ENCODE measurements at regions of chr10 and their contacts with region 1.

Region 1: DNA sequence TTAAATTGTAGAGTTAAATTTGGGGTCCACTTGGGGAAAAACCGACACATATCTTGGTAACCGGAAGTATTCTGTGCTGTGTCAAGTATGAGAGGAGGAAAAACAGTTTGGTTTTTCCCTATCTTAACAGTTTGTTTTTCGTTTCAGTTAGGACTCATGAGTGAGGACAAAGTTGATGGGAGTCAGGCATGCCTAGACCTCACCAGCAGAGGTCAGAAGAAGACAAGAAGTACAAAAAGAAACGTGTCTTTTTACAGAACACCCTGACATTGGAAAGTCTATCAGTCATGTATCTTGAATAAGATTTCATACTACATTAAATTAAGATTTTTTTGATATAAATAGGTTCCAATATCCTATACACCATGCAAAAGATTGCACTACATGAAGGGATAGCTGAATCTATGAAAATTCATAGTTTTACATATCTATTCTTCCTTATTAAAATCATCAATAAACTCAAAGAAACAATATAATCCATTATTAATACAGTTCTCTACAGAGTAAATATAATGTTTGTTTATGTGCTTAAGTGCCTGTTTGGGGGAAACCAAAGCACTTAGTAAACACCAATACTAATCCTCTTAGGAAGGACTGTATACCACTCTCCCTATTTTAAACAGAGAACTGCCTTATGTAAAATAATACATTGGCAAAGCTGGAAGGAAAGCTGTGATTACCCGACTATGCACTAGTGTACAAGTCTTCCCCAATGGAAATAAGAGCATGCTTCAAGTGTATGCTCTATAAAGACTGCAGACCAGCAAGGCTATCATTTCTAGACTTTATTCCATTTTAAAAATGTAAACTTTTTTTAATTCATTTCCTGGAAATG is 95.6 kb downstream of the USP6NL start:
- DNase-seq: no peak
- ATAC-seq: peak; percentile 72
- H3K4me3 Mint-ChIP-seq: peak overlapping the region; percentile 46
- H3K27ac Mint-ChIP-seq: peak overlapping the region; percentile 82
- H3K4me1 Mint-ChIP-seq: peaks cover 53% of the 10 kb centered on the region
- H3K27me3 Mint-ChIP-seq: no peaks in the 10 kb centered on the region
- CTCF ChIP-seq: peak; percentile 86

Region 2: GRCh38 chr10:11270135-11270857 is 245.5 kb before region 1 on chr10:
- CTCF ChIA-PET with region 1: no interaction called
- POLR2A ChIA-PET with region 1: no interaction called
- intact Hi-C with region 1: no loop called
- DNase-seq: peak; percentile 57
- ATAC-seq: peak; percentile 89
- H3K4me3 Mint-ChIP-seq: peak overlapping the region; percentile 28
- H3K27ac Mint-ChIP-seq: peak overlapping the region; percentile 77
- H3K4me1 Mint-ChIP-seq: peaks cover 64% of the 10 kb centered on the region
- H3K27me3 Mint-ChIP-seq: no peaks in the 10 kb centered on the region
- CTCF ChIP-seq: no peak

Region 3: DNA sequence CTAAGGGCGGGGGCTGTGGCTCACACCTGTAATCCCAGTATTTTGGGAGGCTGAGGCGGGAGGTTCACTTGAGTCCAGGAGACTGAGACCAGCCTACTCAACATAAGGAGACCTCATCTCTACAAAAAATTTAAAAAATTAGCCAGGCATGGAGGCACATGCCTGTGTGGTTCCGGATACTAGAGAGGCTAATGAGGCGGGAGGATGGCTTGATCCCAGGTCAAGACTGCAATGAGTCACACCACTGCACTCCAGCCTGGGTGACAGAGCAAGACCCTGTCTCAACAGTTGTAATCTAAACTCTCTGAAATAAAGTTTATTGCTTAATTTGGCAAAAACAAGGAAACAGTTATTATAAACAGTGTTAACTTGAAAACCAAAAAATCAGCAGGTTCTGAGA is 27.7 kb before region 1 on chr10:
- CTCF ChIA-PET with region 1: no interaction called
- POLR2A ChIA-PET with region 1: no interaction called
- intact Hi-C with region 1: no loop called
- DNase-seq: no peak
- ATAC-seq: no peak
- H3K4me3 Mint-ChIP-seq: no peak overlapping the region
- H3K27ac Mint-ChIP-seq: no peak overlapping the region
- H3K4me1 Mint-ChIP-seq: peaks cover 16% of the 10 kb centered on the region
- H3K27me3 Mint-ChIP-seq: no peaks in the 10 kb centered on the region
- CTCF ChIP-seq: no peak

Region 4: DNA sequence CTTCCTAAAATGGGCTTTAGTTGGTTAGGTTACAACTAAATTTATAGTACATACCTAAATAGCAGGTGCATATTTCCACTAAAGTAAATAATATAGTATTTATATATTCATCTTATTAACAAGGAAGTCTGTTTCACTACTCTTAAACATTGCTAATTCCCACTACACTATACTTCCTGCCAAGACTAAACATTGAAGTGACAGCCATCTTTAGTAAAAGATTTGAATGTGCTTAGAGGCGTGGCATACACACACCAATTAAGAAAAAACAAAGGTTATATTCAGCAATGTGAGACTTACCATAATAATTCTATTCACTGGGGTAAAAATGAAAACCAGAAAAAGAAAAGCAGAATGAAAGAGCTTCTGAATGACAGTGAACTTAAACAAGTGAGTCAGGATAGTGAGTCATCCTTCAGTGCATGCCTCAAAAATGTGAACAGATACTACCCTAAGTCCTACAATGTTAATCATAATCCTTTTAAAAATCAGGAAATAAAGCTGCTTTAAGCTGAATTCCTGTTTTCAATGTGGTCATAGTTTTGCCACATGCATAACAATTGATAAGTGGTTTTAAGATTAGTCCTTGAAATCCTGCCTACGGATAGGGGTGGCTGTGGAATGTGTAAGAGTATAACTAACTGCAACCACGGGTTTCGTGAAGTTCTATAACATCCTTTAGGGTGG is 36.2 kb after region 1 on chr10:
- CTCF ChIA-PET with region 1: no interaction called
- POLR2A ChIA-PET with region 1: no interaction called
- intact Hi-C with region 1: loop called (anchors 2 kb)
- DNase-seq: no peak
- ATAC-seq: peak; percentile 55
- H3K4me3 Mint-ChIP-seq: peak overlapping the region; percentile 66
- H3K27ac Mint-ChIP-seq: peak overlapping the region; percentile 87
- H3K4me1 Mint-ChIP-seq: peaks cover 83% of the 10 kb centered on the region
- H3K27me3 Mint-ChIP-seq: no peaks in the 10 kb centered on the region
- CTCF ChIP-seq: no peak

Region 5: GRCh38 chr10:11578802-11579255 is 63.0 kb after region 1 on chr10:
- CTCF ChIA-PET with region 1: interaction called, 3 read pairs
- POLR2A ChIA-PET with region 1: no interaction called
- intact Hi-C with region 1: loop called (anchors 2 kb)
- DNase-seq: no peak
- ATAC-seq: peak; percentile 72
- H3K4me3 Mint-ChIP-seq: peak overlapping the region; percentile 46
- H3K27ac Mint-ChIP-seq: peak overlapping the region; percentile 67
- H3K4me1 Mint-ChIP-seq: peaks cover 75% of the 10 kb centered on the region
- H3K27me3 Mint-ChIP-seq: no peaks in the 10 kb centered on the region
- CTCF ChIP-seq: no peak

Region 6: GRCh38 chr10:11684717-11685645 is 169.2 kb after region 1 on chr10:
- CTCF ChIA-PET with region 1: interaction called, 4 read pairs
- POLR2A ChIA-PET with region 1: interaction called, 3 read pairs
- intact Hi-C with region 1: loop called (anchors 1 kb)
- DNase-seq: peak; percentile 69
- ATAC-seq: peak; percentile 76
- H3K4me3 Mint-ChIP-seq: peak overlapping the region; percentile 90
- H3K27ac Mint-ChIP-seq: peak overlapping the region; percentile 100
- H3K4me1 Mint-ChIP-seq: peaks cover 91% of the 10 kb centered on the region
- H3K27me3 Mint-ChIP-seq: no peaks in the 10 kb centered on the region
- CTCF ChIP-seq: no peak

Region 7: DNA sequence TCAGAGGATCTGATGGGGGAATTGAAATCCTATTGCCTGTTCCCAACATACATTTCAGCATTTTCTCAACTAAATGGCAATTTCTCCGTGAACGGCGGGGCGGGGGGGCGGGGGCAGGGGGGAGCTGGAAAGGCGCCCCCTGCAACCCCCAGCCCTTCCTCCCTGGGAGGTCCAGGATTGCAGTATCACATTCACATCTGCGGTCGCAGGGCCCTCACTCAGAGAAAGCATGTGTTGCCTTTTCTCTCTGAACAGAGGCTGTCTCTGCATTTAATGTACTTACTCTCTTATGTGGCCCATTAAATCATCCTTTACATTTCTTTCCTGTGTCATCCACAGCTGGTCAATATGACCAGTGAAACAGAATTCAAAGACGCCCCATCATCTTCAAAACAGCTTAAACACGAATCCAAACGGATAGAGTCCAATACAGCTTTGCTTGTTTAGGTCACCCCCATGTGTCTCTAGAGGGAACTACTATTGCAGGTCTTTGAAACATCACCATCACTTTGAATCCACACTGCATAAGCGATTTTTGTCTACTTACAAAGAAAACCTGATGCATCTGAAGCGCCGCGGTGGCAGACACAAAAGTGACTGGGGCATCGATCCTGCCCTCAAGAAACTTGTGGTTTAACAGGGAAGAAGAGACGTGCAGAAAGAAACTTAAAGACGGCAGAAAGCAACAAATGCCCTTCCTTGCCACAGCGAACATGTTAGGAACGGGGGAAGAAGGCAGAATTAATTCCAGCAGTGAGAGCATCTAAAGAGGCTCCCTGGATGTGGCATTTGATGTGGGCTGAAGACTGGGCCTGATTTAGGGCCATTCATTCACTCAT is 209.3 kb after region 1 on chr10:
- CTCF ChIA-PET with region 1: interaction called, 92 read pairs
- POLR2A ChIA-PET with region 1: interaction called, 6 read pairs
- intact Hi-C with region 1: loop called (anchors 1 kb)
- DNase-seq: no peak
- ATAC-seq: peak; percentile 95
- H3K4me3 Mint-ChIP-seq: no peak overlapping the region
- H3K27ac Mint-ChIP-seq: peak overlapping the region; percentile 79
- H3K4me1 Mint-ChIP-seq: peaks cover 29% of the 10 kb centered on the region
- H3K27me3 Mint-ChIP-seq: no peaks in the 10 kb centered on the region
- CTCF ChIP-seq: peak; percentile 45

Region 8: GRCh38 chr10:11757821-11758463 is 242.1 kb after region 1 on chr10:
- CTCF ChIA-PET with region 1: interaction called, 76 read pairs
- POLR2A ChIA-PET with region 1: interaction called, 3 read pairs
- intact Hi-C with region 1: loop called (anchors 1 kb)
- DNase-seq: peak; percentile 72
- ATAC-seq: peak; percentile 100
- H3K4me3 Mint-ChIP-seq: no peak overlapping the region
- H3K27ac Mint-ChIP-seq: no peak overlapping the region
- H3K4me1 Mint-ChIP-seq: peaks cover 4% of the 10 kb centered on the region
- H3K27me3 Mint-ChIP-seq: no peaks in the 10 kb centered on the region
- CTCF ChIP-seq: no peak

Region 9: DNA sequence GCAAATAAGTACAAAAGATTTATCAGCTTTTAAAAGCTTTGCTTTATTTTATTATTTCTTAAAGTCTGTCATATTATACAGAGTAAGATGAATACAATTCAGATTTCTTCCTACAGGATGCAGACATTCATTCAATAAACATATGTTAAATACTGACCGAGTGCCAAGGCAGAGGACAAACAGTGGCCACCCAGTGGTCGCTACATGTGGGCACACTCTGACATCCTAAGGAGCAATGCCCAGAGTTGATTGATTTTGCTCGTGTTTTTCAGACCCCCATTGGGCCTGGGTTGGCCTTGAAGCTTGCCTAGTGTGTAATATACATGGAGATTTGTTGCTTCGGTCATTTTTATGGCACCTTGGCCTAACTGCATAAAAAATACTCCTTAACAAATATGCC is 1284.5 kb after region 1 on chr10:
- CTCF ChIA-PET with region 1: no interaction called
- POLR2A ChIA-PET with region 1: no interaction called
- intact Hi-C with region 1: no loop called
- DNase-seq: no peak
- ATAC-seq: no peak
- H3K4me3 Mint-ChIP-seq: no peak overlapping the region
- H3K27ac Mint-ChIP-seq: no peak overlapping the region
- H3K4me1 Mint-ChIP-seq: no peaks in the 10 kb centered on the region
- H3K27me3 Mint-ChIP-seq: no peaks in the 10 kb centered on the region
- CTCF ChIP-seq: no peak

Measured in activated B cell treated with CpG ODN at 0.5 μM for 24 hours (primary cell).